ENCODE measurements at regions of chr15 and their contacts with region 1.

Region 1: GRCh38 chr15:79364571-79365240 is 53.8 kb downstream of the TMED3 start:
- DNase-seq: no peak
- ATAC-seq: peak in 1 of 2 experiments; percentile 47; a peak in 1 of 6 replicates
- H3K4me3 ChIP-seq: no peak overlapping the region
- H3K27ac ChIP-seq: no peak overlapping the region
- H3K4me1 ChIP-seq: no peaks in the 10 kb centered on the region
- CTCF ChIP-seq: no peak
- EP300 ChIP-seq: no peak
- POLR2A ChIP-seq: no peak
- RAD21 ChIP-seq: no peak

Region 2: DNA sequence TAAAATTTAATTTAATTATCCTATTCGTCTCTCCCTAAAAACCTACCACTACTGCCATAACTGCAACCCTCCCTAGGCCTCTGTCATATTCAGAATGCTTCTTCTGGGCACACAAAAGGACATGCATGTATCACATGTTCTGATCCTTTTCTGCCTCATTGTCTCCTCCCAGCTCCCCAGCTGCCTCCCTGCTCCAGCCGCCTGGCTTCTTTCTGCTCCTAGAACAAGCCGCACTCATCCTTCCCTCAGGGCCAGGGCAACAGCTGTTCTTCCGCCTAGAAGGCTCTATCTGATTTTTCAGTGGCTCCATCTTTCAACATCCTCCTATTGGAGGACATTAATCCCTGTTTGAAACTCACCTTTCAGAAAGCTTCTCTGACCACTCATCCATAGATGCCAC is 15.2 kb before region 1 on chr15:
- CTCF ChIA-PET with region 1: interaction called, 10 read pairs
- POLR2A ChIA-PET with region 1: no interaction called
- DNase-seq: no peak
- ATAC-seq: no peak
- H3K4me3 ChIP-seq: no peak overlapping the region
- H3K27ac ChIP-seq: no peak overlapping the region
- H3K4me1 ChIP-seq: no peaks in the 10 kb centered on the region
- CTCF ChIP-seq: no peak
- EP300 ChIP-seq: no peak
- POLR2A ChIP-seq: no peak
- RAD21 ChIP-seq: no peak